ENCODE measurements at regions of chr18 and their contacts with region 1.

Region 1: DNA sequence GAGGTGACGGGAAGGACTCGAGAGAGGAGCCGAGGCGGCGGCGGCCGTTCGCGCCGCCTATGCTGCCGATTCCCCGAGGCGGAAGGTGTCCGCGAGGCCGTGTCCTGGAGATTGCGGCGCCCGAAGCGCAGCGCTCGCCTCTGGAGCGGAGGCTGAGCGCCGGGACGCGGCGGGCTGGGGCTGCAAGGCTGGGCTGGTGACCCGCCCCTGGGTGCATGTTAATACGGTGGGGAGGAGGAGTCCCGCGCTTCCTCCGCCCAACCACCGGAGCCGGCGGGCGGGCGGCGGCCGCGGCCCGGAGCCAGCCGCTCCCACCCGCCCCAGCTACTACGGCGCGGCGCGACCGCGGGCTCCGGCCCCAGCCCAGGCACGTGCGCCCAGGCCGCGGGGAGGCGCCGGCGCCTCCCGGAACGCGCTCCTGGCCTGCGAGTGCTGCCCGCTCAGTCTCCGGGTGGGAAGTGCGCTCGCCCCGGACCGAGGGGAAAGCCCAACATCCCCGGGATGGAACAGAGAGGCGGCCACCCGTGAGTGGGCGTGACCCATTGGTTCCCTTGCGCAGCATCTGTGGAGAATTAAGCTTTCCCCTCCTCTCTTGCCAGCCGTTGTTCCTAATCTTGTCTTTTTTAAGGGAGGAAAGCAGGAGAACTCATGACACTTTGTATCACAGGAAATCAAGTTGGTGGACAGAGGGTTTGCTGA is at the start of gene DLGAP1:
- DNase-seq: no peak
- ATAC-seq: peak; percentile 85
- H3K4me3 ChIP-seq: no peak within 1 kb of the TSS
- H3K27ac ChIP-seq: no peak within 1 kb of the TSS
- H3K4me1 ChIP-seq: no peaks in the 10 kb centered on the region
- H3K27me3 ChIP-seq: no peaks in the 10 kb centered on the region; a peak in 1 of 4 replicates
- CTCF ChIP-seq: peak in 1 of 3 experiments; percentile 23; a peak in 1 of 6 replicates
- EP300 ChIP-seq: no peak
- POLR2A ChIP-seq: 0 out of 2 replicates have a peak, but pooled peaks have one; percentile 23
- RAD21 ChIP-seq: no peak
- polyA plus RNA-seq, gene DLGAP1: 0.23 to 0.60 TPM

Region 2: GRCh38 chr18:4096486-4096885 is 358.8 kb before region 1 on chr18:
- CTCF ChIA-PET with region 1: no interaction called
- POLR2A ChIA-PET with region 1: no interaction called
- RAD21 ChIA-PET with region 1: no interaction called
- SMC1A ChIA-PET with region 1: no interaction called
- in situ Hi-C with region 1: no loop called
- intact Hi-C with region 1: loop called (anchors 5 kb)
- DNase-seq: no peak
- ATAC-seq: no peak
- H3K4me3 ChIP-seq: no peak overlapping the region
- H3K27ac ChIP-seq: no peak overlapping the region
- H3K4me1 ChIP-seq: no peaks in the 10 kb centered on the region
- H3K27me3 ChIP-seq: no peaks in the 10 kb centered on the region
- CTCF ChIP-seq: no peak
- EP300 ChIP-seq: no peak
- POLR2A ChIP-seq: no peak
- RAD21 ChIP-seq: no peak

Region 3: GRCh38 chr18:4391859-4392258 is 63.4 kb before region 1 on chr18:
- CTCF ChIA-PET with region 1: interaction called, 4 read pairs
- POLR2A ChIA-PET with region 1: interaction called, 3 read pairs
- RAD21 ChIA-PET with region 1: interaction called, 8 read pairs
- SMC1A ChIA-PET with region 1: interaction called, 8 read pairs
- in situ Hi-C with region 1: no loop called
- intact Hi-C with region 1: loop called (anchors 5 kb)
- DNase-seq: peak; percentile 60
- ATAC-seq: peak; percentile 65
- H3K4me3 ChIP-seq: no peak overlapping the region
- H3K27ac ChIP-seq: 0 out of 2 replicates have a peak overlapping the region, but pooled peaks have one; percentile 20
- H3K4me1 ChIP-seq: no peaks in the 10 kb centered on the region
- H3K27me3 ChIP-seq: no peaks in the 10 kb centered on the region
- CTCF ChIP-seq: no peak
- EP300 ChIP-seq: peak; percentile 96 to 99
- POLR2A ChIP-seq: no peak
- RAD21 ChIP-seq: no peak

Region 4: GRCh38 chr18:4755848-4756247 is 300.6 kb after region 1 on chr18:
- CTCF ChIA-PET with region 1: no interaction called
- POLR2A ChIA-PET with region 1: no interaction called
- RAD21 ChIA-PET with region 1: interaction called, 5 read pairs
- SMC1A ChIA-PET with region 1: interaction called, 4 read pairs
- in situ Hi-C with region 1: no loop called
- intact Hi-C with region 1: loop called (anchors 5 kb)
- DNase-seq: peak; percentile 71
- ATAC-seq: peak; percentile 92
- H3K4me3 ChIP-seq: no peak overlapping the region
- H3K27ac ChIP-seq: no peak overlapping the region
- H3K4me1 ChIP-seq: no peaks in the 10 kb centered on the region; the same call in 1 of the 2 replicates
- H3K27me3 ChIP-seq: no peaks in the 10 kb centered on the region
- CTCF ChIP-seq: no peak
- EP300 ChIP-seq: peak in 1 of 2 experiments; percentile 59; a peak in 1 of 4 replicates
- POLR2A ChIP-seq: no peak
- RAD21 ChIP-seq: no peak

Region 5: DNA sequence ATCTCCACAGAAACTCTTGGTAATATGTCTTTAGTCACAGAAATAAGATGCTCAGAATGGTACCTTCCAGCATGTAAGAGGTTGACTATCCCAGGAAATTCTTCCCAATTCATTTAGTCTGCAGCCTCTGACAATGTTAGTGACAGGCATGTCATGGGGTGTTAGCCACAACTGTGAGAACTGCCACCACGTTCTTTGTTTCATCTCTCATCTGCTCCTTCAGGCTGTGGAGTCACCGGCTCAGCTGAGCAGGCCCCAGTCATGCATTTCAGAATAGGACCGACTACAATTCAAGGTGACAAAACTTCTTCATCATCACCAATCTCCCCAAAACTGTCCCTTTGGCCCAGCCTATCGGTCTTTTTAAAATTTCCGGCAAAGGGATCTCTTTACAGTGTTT is 574.3 kb after region 1 on chr18:
- CTCF ChIA-PET with region 1: no interaction called
- POLR2A ChIA-PET with region 1: no interaction called
- RAD21 ChIA-PET with region 1: no interaction called
- SMC1A ChIA-PET with region 1: interaction called, 5 read pairs
- in situ Hi-C with region 1: no loop called
- intact Hi-C with region 1: loop called (anchors 10 kb)
- DNase-seq: no peak
- ATAC-seq: peak; percentile 79
- H3K4me3 ChIP-seq: no peak overlapping the region
- H3K27ac ChIP-seq: no peak overlapping the region
- H3K4me1 ChIP-seq: no peaks in the 10 kb centered on the region
- H3K27me3 ChIP-seq: no peaks in the 10 kb centered on the region
- CTCF ChIP-seq: no peak
- EP300 ChIP-seq: no peak
- POLR2A ChIP-seq: no peak
- RAD21 ChIP-seq: no peak

Measured in GM12878 (cell line).